IMR-90 (cell line): ENCODE measurements at regions of chrX and their contacts with region 1.

Region 1: DNA sequence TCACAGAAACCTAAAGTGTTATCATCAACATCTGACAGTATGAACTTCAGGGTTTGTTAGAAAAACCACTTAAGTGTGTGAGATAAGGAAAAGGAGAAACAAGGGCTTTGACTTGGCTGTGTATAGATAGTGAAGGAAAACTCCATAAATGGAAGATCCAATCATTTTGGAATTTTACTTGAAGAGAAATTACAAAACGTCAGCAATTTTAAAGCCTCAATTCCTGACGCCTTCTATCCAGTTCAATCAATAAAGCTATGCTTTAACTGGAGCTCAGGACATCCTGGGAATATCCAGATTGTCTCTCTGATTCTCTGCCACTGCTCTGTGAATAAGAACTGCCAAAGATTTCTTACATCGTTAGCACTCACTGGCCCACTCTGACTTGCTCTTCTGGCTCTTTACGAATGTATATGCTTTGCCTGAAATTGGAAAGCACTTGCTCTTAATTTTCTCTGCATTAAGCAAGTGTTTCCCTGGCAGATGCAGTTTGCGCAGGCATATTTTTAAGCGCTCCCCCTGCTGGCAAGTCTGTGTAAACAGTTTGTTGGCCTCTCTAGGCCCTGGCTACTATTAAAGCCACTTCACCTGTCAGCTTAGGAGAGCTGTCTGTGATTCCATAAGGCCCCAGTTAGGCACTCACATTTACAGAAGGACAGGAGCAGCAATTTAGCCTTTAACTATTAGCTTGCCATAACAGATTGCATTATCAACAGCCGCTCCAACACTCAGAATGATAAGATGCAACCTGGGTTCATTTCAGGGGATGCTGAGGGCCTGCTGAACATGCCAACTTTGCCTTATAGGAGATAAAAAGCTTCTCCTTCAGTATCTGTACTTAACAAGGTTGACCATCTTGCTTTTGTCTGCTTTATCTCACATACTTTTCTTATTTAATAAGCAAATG is 251.4 kb upstream of the DDX53 start:
- DNase-seq: peak; percentile 47
- ATAC-seq: peak; percentile 61; the same call in 1 of the 2 replicates
- H3K4me3 ChIP-seq: no peak overlapping the region
- H3K27ac ChIP-seq: no peak overlapping the region
- H3K4me1 ChIP-seq: peaks cover 2% of the 10 kb centered on the region; the same call in 1 of the 2 replicates
- H3K27me3 ChIP-seq: no peaks in the 10 kb centered on the region
- CTCF ChIP-seq: peak; percentile 63
- POLR2A ChIP-seq: no peak
- RAD21 ChIP-seq: peak; percentile 62

Region 2: GRCh38 chrX:22186165-22186564 is 562.2 kb before region 1 on chrX:
- CTCF ChIA-PET with region 1: no interaction called
- POLR2A ChIA-PET with region 1: no interaction called
- dilution Hi-C with region 1: no loop called
- in situ Hi-C with region 1: no loop called
- intact Hi-C with region 1: no loop called
- DNase-seq: no peak
- ATAC-seq: no peak
- H3K4me3 ChIP-seq: no peak overlapping the region
- H3K27ac ChIP-seq: no peak overlapping the region
- H3K4me1 ChIP-seq: no peaks in the 10 kb centered on the region
- H3K27me3 ChIP-seq: no peaks in the 10 kb centered on the region; the same call in 1 of the 2 replicates
- CTCF ChIP-seq: no peak
- POLR2A ChIP-seq: no peak
- RAD21 ChIP-seq: no peak

Region 3: GRCh38 chrX:22634083-22634482 is 114.3 kb before region 1 on chrX:
- CTCF ChIA-PET with region 1: no interaction called
- POLR2A ChIA-PET with region 1: no interaction called
- dilution Hi-C with region 1: no loop called
- in situ Hi-C with region 1: no loop called
- intact Hi-C with region 1: loop called (anchors 5 kb)
- DNase-seq: peak; percentile 79
- ATAC-seq: peak; percentile 64
- H3K4me3 ChIP-seq: no peak overlapping the region
- H3K27ac ChIP-seq: peak overlapping the region; percentile 62; the same call in 1 of the 2 replicates
- H3K4me1 ChIP-seq: peaks cover 2% of the 10 kb centered on the region
- H3K27me3 ChIP-seq: no peaks in the 10 kb centered on the region
- CTCF ChIP-seq: no peak
- POLR2A ChIP-seq: no peak
- RAD21 ChIP-seq: no peak

Region 4: DNA sequence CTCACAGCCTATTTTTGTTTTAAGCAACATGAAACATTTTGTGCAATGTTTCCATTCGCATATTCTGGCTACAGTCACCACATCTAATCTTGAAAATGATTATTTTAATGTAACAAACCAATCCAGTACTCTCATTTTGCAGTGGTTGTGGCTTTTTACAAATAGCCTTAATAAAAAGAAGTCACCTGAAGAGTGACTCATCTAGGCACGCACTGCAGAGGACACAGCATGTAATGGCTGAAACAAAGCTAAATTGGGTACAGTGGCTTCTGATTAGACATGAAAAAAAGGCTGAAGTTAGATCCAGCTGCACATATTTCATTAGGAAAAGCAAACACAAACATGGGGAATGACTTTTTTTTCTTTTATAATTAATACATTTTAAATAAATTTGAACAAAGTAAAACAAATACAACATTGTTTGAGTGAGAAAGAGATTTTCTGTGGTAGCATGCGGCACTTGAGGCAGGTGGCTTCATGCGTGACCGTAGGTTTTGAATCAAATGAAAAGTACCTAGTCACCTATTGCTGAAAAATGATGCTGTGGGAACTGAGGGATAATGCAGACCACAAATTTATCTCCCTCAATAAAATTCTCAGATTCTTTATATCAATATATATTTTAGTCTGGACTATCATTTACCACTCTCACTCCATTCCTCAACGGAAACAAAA is 10.6 kb after region 1 on chrX:
- CTCF ChIA-PET with region 1: interaction called, 12 read pairs
- POLR2A ChIA-PET with region 1: no interaction called
- dilution Hi-C with region 1: no loop called
- in situ Hi-C with region 1: no loop called
- intact Hi-C with region 1: no loop called
- DNase-seq: no peak
- ATAC-seq: no peak
- H3K4me3 ChIP-seq: no peak overlapping the region
- H3K27ac ChIP-seq: no peak overlapping the region
- H3K4me1 ChIP-seq: no peaks in the 10 kb centered on the region
- H3K27me3 ChIP-seq: no peaks in the 10 kb centered on the region
- CTCF ChIP-seq: no peak
- POLR2A ChIP-seq: no peak
- RAD21 ChIP-seq: no peak

Region 5: GRCh38 chrX:22889819-22890218 is 141.5 kb after region 1 on chrX:
- CTCF ChIA-PET with region 1: no interaction called
- POLR2A ChIA-PET with region 1: no interaction called
- dilution Hi-C with region 1: no loop called
- in situ Hi-C with region 1: no loop called
- intact Hi-C with region 1: no loop called
- DNase-seq: no peak
- ATAC-seq: no peak
- H3K4me3 ChIP-seq: no peak overlapping the region
- H3K27ac ChIP-seq: no peak overlapping the region
- H3K4me1 ChIP-seq: 0 out of 2 replicates have a peak, but pooled peaks cover 2% of the 10 kb centered on the region
- H3K27me3 ChIP-seq: no peaks in the 10 kb centered on the region; the same call in 1 of the 2 replicates
- CTCF ChIP-seq: no peak
- POLR2A ChIP-seq: no peak
- RAD21 ChIP-seq: no peak

Region 6: DNA sequence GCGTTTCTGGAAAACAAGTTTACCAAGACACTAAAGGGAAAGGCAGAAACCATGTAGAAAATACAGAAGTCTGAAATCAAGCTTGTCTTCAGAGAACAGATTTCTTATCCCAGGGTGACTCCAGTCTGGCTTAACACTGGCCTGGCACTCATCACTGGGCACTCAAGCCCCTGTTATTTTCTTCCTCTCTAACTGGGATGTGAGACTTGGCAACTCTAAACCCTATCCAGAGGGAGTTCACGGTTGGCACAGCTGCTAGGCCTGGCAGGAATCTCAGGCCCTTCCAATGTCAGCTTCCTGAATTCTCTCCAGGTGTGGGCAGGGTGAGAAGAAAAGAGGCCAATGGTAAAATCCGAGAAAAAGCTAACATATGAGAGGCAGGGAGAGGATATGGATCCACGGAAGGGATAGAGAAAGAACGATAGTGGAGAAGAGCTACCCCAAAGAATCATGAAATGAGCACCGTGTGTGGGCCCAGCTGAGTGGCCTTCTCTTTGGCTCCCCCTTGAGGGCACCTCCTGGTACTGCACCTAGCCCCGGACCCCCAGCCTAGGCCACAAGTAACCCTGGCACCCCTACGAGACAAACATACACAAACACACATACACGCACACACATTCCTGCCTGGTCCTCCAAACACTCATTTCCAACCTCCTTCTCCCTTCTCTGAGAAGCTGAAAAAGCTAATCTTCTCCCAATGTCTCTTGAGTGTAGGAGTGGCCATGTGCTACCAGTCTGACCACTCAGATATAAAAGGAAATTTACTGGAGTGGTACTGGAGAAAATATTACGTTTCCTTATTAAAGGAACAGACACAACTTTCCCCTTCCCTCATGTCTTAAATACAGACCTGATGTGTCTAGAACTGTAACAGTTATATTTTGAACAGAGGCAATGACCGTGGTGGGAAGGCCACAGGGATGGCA is 569.7 kb after region 1 on chrX:
- CTCF ChIA-PET with region 1: no interaction called
- POLR2A ChIA-PET with region 1: no interaction called
- dilution Hi-C with region 1: no loop called
- in situ Hi-C with region 1: no loop called
- intact Hi-C with region 1: loop called (anchors 5 kb)
- DNase-seq: no peak
- ATAC-seq: peak; percentile 80
- H3K4me3 ChIP-seq: no peak overlapping the region
- H3K27ac ChIP-seq: no peak overlapping the region
- H3K4me1 ChIP-seq: no peaks in the 10 kb centered on the region
- H3K27me3 ChIP-seq: no peaks in the 10 kb centered on the region
- CTCF ChIP-seq: peak; percentile 52
- POLR2A ChIP-seq: no peak
- RAD21 ChIP-seq: peak; percentile 56